Dendritic cell treated with granulocyte-macrophage colony-stimulating factor and Interleukin-4, amounts not matched to agents 40 ng/mL and 50 ng/mL, for 4 days (primary cell): ENCODE measurements at regions of chr12 and their contacts with region 1.

Region 1: DNA sequence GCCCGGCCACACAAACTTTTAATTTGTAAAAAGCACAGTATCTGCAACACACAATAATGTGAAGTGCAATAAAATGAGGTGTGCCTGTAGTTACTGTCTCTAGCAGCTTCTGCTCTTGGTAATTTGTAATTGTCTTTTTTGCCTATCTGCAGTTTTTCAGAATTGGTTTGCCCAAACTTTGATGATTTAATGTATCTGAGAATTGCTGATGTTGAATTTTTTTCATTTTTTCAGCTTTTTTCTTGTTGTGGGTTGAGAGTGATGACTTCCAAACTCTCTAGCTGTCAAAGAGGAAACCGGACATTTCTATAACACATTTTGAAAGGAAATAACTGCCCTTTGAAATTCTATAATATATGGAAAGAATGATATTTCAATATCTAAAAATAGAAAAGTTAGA is 236.9 kb downstream of the RERGL start:
- H3K4me3 Mint-ChIP-seq: no peak overlapping the region
- H3K27ac Mint-ChIP-seq: no peak overlapping the region
- H3K4me1 Mint-ChIP-seq: no peaks in the 10 kb centered on the region
- H3K27me3 Mint-ChIP-seq: no peaks in the 10 kb centered on the region

Region 2: GRCh38 chr12:17691369-17691768 is 161.7 kb before region 1 on chr12:
- intact Hi-C with region 1: no loop called
- H3K4me3 Mint-ChIP-seq: no peak overlapping the region
- H3K27ac Mint-ChIP-seq: no peak overlapping the region
- H3K4me1 Mint-ChIP-seq: no peaks in the 10 kb centered on the region
- H3K27me3 Mint-ChIP-seq: no peaks in the 10 kb centered on the region

Region 3: DNA sequence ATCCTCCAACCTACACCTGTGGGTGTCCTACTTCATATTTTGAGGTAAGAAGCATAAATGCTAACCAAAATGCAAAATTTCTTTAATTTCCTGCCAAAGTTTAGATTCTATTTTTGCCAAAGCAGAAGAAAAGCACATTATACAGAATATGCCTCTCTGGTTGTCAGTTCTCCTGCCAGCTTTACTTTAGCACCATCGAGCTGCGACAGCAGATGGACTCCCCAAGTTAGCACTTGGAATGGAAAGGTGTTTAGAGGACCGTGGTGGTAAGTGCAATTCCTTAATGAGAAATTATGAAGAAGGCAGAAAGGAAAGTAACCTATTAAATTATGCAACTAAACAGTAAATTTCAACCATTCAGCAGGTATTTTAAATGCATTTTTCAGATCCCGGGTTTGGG is 89.7 kb before region 1 on chr12:
- intact Hi-C with region 1: loop called (anchors 2 kb)
- H3K4me3 Mint-ChIP-seq: no peak overlapping the region
- H3K27ac Mint-ChIP-seq: no peak overlapping the region
- H3K4me1 Mint-ChIP-seq: no peaks in the 10 kb centered on the region
- H3K27me3 Mint-ChIP-seq: no peaks in the 10 kb centered on the region

Region 4: DNA sequence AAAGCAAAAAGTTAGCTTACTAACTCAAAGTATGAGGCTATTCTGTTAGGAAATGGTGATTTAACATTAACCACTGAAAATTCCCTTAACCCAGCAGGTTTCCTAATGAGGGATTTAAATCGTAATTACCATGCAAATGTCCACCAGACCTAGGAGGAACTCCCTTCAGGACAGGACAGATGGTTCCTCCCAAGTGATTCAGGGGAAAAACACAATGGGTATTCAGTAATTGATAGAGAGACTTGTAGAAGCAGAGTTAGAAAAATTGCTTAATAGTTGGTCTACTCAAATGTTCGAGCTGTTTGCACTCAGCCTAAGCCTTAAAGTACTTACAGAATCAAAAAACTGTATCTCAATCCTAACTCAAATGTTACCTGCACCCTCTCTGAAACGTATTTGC is 215.3 kb after region 1 on chr12:
- intact Hi-C with region 1: no loop called
- H3K4me3 Mint-ChIP-seq: no peak overlapping the region
- H3K27ac Mint-ChIP-seq: no peak overlapping the region
- H3K4me1 Mint-ChIP-seq: no peaks in the 10 kb centered on the region
- H3K27me3 Mint-ChIP-seq: no peaks in the 10 kb centered on the region